ENCODE measurements at regions of chr1 and their contacts with region 1.

Region 1: GRCh38 chr1:185500001-185500626 is 183.1 kb upstream of the IVNS1ABP start:
- DNase-seq: no peak

Region 2: DNA sequence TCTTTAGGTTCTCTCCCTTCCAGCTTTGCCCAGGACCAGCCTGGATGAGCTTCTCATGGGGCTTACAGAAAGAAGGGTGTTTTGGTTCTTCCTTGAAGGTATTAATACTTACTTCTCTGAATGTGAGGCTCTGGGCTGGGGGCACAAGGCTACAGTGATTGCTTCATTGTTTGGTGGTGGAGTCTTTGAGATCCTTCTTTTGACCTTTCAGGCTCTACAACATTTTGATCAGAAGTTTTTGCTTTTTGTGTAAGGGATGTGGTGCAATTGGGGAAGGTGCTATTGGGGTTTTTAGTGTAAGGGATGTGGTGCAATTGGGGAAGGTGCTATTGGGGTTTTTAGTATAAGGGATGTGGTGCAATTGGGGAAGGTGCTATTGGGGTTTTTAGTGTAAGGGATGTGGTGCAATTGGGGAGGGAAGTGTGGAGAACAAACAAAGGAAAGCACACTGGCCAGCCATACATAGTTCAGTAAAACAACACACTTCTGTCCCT is 79.5 kb before region 1 on chr1:
- intact Hi-C with region 1: no loop called
- DNase-seq: no peak

Region 3: GRCh38 chr1:185453496-185454192 is 46.5 kb before region 1 on chr1:
- intact Hi-C with region 1: loop called (anchors 5 kb)
- DNase-seq: no peak

Region 4: DNA sequence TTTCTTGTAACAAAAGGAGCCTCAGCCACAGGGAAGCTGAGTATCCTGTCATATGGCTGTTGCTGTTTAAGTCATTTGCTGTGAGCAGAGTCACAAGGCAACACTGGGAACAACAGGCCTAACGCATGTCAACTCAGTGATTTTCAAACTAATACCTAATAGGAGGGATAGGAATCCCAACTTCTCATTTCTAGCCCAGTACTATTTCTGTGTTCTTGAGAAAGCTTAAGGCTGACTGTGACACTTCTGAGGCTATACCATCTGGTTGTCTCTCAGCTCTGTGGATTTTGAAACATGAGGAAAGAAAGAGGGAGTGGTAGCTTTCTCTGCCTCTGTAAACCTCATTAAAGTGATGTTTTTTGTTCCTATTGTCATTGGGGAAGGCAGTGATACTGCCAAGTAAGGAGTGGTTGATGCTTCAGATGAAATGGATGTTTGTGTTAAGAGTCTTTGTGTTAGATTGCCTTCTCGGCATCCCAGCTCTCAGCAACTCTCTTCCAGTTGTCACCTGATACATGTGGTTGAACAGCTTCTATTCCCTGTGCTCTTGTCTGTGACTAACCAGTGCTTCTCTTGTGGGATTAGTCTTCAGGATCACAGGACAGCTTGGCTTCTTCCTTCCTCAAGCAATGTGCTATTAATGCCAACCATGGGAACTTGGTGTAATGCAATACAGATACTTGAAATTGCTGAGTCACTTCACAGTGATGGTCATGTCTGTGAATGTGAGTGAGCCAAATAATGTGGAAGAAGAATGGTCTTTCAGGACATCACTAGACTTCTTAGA is 16.3 kb before region 1 on chr1:
- intact Hi-C with region 1: no loop called
- DNase-seq: no peak

Region 5: DNA sequence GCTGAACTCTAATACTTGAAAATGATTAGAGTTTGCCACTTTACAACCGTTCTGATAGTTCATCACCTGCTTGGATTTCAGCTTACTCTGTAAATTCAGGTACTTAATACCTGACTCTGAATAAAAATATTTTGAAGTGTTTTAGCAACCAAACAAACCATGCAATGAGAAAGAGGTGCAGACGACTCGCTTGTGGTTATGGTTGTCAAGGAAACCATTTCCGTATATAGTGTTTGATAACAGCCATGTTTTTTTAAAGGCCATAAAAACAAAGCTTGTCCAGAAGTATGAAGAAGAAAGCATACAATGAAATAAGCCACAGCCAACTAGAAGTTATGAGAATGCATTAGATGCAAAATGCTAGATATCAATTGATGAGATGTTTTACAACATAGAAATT is 66.9 kb after region 1 on chr1:
- intact Hi-C with region 1: no loop called
- DNase-seq: no peak

Region 6: GRCh38 chr1:185646202-185646683 is 146.1 kb after region 1 on chr1:
- intact Hi-C with region 1: no loop called
- DNase-seq: no peak